Heart right ventricle (tissue), 16 donors: ENCODE measurements at regions of chr3 and their contacts with region 1.

Region 1: GRCh38 chr3:16427103-16427965 is 86.2 kb downstream of the RFTN1 start:
- DNase-seq: peak in 1 of 2 donors; percentile 55
- ATAC-seq: peak; percentile 88 to 98 (median 94)
- H3K4me3 ChIP-seq: no peak overlapping the region
- H3K27ac ChIP-seq: peak overlapping the region in 9 of 10 donors; percentile 13 to 74 (median 55)
- H3K4me1 ChIP-seq: peaks cover 0 to 42% (median 16%) of the 10 kb centered on the region in 9 donors
- H3K27me3 ChIP-seq: no peaks in the 10 kb centered on the region
- CTCF ChIP-seq: no peak

Region 2: DNA sequence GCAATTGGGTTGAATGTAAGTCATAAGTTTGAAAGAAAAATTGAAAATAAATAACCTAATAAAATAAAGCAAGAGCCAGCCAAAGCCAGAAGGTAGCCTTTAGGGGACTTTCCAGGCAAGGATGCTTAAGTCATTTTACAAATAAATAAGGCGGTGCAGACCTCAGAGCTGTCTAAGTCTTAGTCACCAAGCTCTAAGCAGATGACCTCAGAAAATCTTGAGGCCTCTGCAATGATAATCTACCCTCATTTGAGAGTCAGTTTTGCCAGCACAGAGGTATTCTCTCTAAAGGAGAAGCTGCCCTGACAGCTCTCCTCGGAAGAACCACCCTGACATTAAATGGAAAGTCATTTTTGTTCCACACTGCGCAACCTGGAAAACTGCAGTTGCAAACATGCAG is 48.4 kb before region 1 on chr3:
- intact Hi-C with region 1: no loop called
- DNase-seq: no peak
- ATAC-seq: no peak
- H3K4me3 ChIP-seq: no peak overlapping the region
- H3K27ac ChIP-seq: peak overlapping the region in 1 of 10 donors; percentile 32
- H3K4me1 ChIP-seq: peaks cover 25 to 64% (median 47%) of the 10 kb centered on the region in 9 donors
- H3K27me3 ChIP-seq: no peaks in the 10 kb centered on the region
- CTCF ChIP-seq: no peak

Region 3: DNA sequence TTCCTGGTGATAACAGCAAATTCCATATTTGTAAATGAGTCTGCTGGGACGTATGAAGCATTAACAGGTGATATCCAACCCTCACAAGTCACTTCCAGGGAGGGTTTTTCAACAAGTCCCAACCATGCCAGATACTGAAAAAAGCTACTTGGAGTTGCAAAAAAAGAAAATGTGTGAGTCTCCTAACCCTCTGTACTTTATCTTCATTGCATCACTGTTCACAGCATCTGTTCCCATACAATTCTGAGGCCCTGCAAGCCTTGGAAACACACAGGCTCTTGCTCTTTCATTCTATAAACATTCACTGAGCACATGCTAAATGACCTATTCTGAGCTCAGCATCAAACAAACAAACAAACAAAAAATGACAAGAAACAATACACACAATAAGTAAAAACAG is 34.6 kb before region 1 on chr3:
- intact Hi-C with region 1: loop called in 1 of 10 experiments (anchors 5 kb)
- DNase-seq: no peak
- ATAC-seq: peak in 1 of 8 donors; percentile 48
- H3K4me3 ChIP-seq: no peak overlapping the region
- H3K27ac ChIP-seq: peak overlapping the region in 2 of 10 donors; percentile 45 to 46
- H3K4me1 ChIP-seq: peaks cover 0 to 81% (median 41%) of the 10 kb centered on the region in 9 donors
- H3K27me3 ChIP-seq: no peaks in the 10 kb centered on the region
- CTCF ChIP-seq: no peak